Sigmoid colon (tissue), 7 donors: ENCODE measurements at regions of chr1 and their contacts with region 1.

Region 1: GRCh38 chr1:203558064-203558760 is 64.3 kb downstream of the OPTC start:
- DNase-seq: peak; percentile 91
- H3K4me3 ChIP-seq: no peak overlapping the region
- H3K27ac ChIP-seq: peak overlapping the region; percentile 89 to 97 (median 92)
- H3K4me1 ChIP-seq: peaks cover 0 to 65% (median 63%) of the 10 kb centered on the region in 4 donors
- H3K27me3 ChIP-seq: no peaks in the 10 kb centered on the region
- CTCF ChIP-seq: no peak
- EP300 ChIP-seq: peak; percentile 80 to 99 (median 86)
- POLR2A ChIP-seq: no peak

Region 2: DNA sequence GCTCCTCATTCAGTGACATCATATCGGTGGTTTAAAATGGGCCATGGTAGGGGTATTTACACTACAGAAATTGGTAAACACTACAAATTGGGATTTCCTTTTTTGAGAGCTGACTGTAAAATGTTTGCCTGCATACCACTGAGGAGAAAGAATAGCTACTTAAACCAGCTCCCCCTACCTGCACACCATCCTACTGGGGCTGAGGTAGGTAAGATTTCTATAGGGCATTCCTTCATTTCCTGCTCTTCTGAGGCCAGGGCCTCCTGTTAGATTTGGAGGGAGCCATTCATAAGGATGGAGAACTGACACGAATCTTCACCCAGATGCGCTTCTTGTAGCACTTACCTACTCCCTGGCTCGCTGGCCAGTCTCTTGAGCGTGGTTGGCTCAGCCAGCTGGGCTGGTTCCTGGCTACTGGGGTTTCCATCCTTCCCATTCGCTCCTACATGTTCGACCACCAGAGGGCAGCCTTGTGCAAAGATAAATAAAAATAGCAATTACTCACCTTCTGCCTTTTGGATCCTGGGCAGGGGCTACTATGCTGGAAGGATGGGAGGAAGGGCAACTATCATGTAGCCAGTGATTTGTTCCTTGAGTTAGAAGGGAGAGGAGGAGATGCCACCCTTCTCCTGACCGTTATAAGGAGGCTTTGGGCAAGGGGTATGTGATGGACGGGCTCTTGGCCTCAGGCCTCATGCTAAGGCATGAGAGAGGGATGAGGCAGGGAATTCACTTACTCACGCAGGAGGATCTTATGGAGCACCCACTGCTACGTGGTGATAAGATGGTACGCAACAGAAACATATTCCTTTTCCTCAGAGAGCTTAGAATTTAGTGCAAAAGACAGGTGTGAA is 53.6 kb before region 1 on chr1:
- intact Hi-C with region 1: loop called (anchors 2 kb)
- DNase-seq: peak; percentile 94
- H3K4me3 ChIP-seq: no peak overlapping the region
- H3K27ac ChIP-seq: peak overlapping the region; percentile 7 to 94 (median 86)
- H3K4me1 ChIP-seq: peaks cover 3 to 79% (median 64%) of the 10 kb centered on the region in 4 donors
- H3K27me3 ChIP-seq: no peaks in the 10 kb centered on the region
- CTCF ChIP-seq: peak; percentile 56 to 87 (median 84)
- EP300 ChIP-seq: no peak
- POLR2A ChIP-seq: no peak

Region 3: GRCh38 chr1:203534527-203535230 is 23.5 kb before region 1 on chr1:
- intact Hi-C with region 1: loop called (anchors 2 kb)
- DNase-seq: peak; percentile 98
- H3K4me3 ChIP-seq: no peak overlapping the region
- H3K27ac ChIP-seq: peak overlapping the region; percentile 80 to 97 (median 87)
- H3K4me1 ChIP-seq: peaks cover 0 to 61% (median 49%) of the 10 kb centered on the region in 4 donors
- H3K27me3 ChIP-seq: no peaks in the 10 kb centered on the region
- CTCF ChIP-seq: no peak
- EP300 ChIP-seq: peak; percentile 87 to 96 (median 94)
- POLR2A ChIP-seq: no peak